ENCODE measurements at regions of chr22 and their contacts with region 1.

Region 1: DNA sequence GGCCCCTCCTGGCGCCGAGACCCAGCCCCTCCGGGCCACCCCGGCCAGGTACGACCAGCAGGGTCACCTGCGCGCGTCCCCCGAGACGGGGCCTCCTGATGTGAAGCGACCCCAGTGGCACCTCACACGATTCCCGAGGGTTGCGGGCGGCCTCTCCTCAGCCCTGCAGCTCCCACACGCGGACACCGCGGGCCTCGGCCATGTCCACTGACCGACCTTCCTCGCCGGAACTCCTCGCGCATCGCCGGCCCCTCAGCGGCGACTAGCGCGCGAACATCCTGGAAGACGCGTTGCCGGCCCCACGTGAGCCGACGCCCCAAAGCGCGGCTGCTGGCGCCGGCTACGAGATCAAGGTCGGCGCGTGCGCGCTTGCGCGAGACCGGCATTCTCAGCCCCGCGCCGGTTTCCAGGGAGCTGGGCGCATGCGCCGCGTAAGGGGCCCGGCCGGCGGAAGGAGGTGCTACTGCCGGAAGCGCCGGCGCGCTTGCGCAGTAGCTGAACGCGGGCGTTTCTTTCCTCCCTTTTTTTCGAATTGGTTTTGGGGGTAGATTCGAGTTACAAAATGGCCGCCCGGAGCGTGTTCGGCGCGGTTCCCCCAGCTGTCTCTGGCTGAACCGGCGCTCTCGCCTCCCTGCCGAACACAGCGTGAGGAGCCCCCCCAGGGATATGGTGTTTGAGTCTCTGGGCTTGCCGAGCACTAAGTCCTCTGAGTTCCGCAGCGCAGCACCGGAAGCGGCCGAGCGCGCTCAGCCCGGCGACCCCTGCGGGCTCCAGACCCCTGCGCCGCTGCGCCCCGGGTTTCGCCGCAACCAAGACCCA is at the start of gene NUP50:
- DNase-seq: peak; percentile 97 to 99 (median 98)
- H3K4me3 ChIP-seq: peak within 1 kb of the TSS; percentile 74 to 98 (median 75)
- H3K4me3 Mint-ChIP-seq: peak within 1 kb of the TSS; percentile 86 to 96
- H3K27ac ChIP-seq: peak within 1 kb of the TSS; percentile 89 to 96
- H3K27ac Mint-ChIP-seq: peak within 1 kb of the TSS; percentile 90 to 98 (median 96)
- H3K4me1 ChIP-seq: peaks cover 82 to 90% of the 10 kb centered on the region in 2 donors
- H3K4me1 Mint-ChIP-seq: peaks cover 70% of the 10 kb centered on the region
- H3K27me3 ChIP-seq: no peaks in the 10 kb centered on the region
- H3K27me3 Mint-ChIP-seq: no peaks in the 10 kb centered on the region
- CTCF ChIP-seq: no peak
- polyA plus RNA-seq, gene NUP50: 23.4 to 28.4 (median 26.9) TPM

Region 2: GRCh38 chr22:45226527-45227186 is 63.0 kb after region 1 on chr22:
- intact Hi-C with region 1: loop called in 1 of 2 experiments (anchors 5 kb)
- DNase-seq: peak; percentile 91 to 97 (median 93)
- H3K4me3 ChIP-seq: peak overlapping the region in 1 of 3 experiments; percentile 67
- H3K4me3 Mint-ChIP-seq: peak overlapping the region; percentile 61 to 80
- H3K27ac ChIP-seq: peak overlapping the region; percentile 95 to 98
- H3K27ac Mint-ChIP-seq: peak overlapping the region; percentile 97 to 100 (median 99)
- H3K4me1 ChIP-seq: peaks cover 96 to 100% of the 10 kb centered on the region in 2 donors
- H3K4me1 Mint-ChIP-seq: peaks cover 95% of the 10 kb centered on the region
- H3K27me3 ChIP-seq: no peaks in the 10 kb centered on the region
- H3K27me3 Mint-ChIP-seq: peaks cover 0 to 2% (median 0%) of the 10 kb centered on the region in 3 donors
- CTCF ChIP-seq: no peak

Region 3: DNA sequence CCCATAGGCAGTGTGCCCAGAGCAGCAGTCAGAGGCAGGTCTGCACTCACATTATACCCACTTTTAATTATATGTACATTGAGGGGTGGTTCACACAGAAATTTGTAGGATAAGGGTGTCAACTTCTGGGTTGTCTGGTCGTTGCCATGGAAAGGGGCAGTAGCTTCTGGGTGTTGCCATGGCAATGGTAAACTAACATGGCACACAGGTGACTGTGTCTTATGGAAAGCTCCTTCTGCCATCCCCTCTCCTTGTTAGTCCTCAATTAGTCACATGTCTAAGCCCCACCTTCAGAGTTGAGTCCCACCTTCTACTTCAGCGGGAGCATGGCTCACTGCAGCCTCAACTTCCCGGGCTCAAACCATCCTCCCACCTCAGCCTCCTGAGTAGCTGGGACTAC is 451.7 kb after region 1 on chr22:
- intact Hi-C with region 1: no loop called
- DNase-seq: no peak
- H3K4me3 ChIP-seq: no peak overlapping the region
- H3K4me3 Mint-ChIP-seq: no peak overlapping the region
- H3K27ac ChIP-seq: no peak overlapping the region
- H3K27ac Mint-ChIP-seq: no peak overlapping the region
- H3K4me1 ChIP-seq: peaks cover 6 to 11% of the 10 kb centered on the region in 2 donors
- H3K4me1 Mint-ChIP-seq: peaks cover 16% of the 10 kb centered on the region
- H3K27me3 ChIP-seq: no peaks in the 10 kb centered on the region
- H3K27me3 Mint-ChIP-seq: peaks cover 3 to 7% (median 5%) of the 10 kb centered on the region in 3 donors
- CTCF ChIP-seq: no peak

Region 4: GRCh38 chr22:46044621-46045438 is 881.2 kb after region 1 on chr22:
- intact Hi-C with region 1: loop called in 1 of 2 experiments (anchors 10 kb)
- DNase-seq: peak in 2 of 3 donors; percentile 19 to 27
- H3K4me3 ChIP-seq: peak overlapping the region; percentile 44 to 84 (median 60)
- H3K4me3 Mint-ChIP-seq: peak overlapping the region; percentile 89 to 95
- H3K27ac ChIP-seq: peak overlapping the region; percentile 75 to 92
- H3K27ac Mint-ChIP-seq: peak overlapping the region; percentile 87 to 94 (median 91)
- H3K4me1 ChIP-seq: peaks cover 66 to 69% of the 10 kb centered on the region in 2 donors
- H3K4me1 Mint-ChIP-seq: peaks cover 66% of the 10 kb centered on the region
- H3K27me3 ChIP-seq: no peaks in the 10 kb centered on the region
- H3K27me3 Mint-ChIP-seq: peaks cover 0 to 2% (median 0%) of the 10 kb centered on the region in 3 donors
- CTCF ChIP-seq: no peak

Measured in CD14-positive monocyte (primary cell).